Right cardiac atrium (tissue), 5 donors: ENCODE measurements at regions of chr4 and their contacts with region 1.

Region 1: GRCh38 chr4:113756005-113756410 is 5.5 kb downstream of the CAMK2D start:
- DNase-seq: no peak
- ATAC-seq: no peak
- H3K4me3 ChIP-seq: peak overlapping the region; percentile 6
- H3K27ac ChIP-seq: no peak overlapping the region
- H3K4me1 ChIP-seq: no peaks in the 10 kb centered on the region
- H3K27me3 ChIP-seq: no peaks in the 10 kb centered on the region

Region 2: GRCh38 chr4:113645771-113646441 is 110.1 kb before region 1 on chr4:
- intact Hi-C with region 1: no loop called
- DNase-seq: no peak
- ATAC-seq: peak; percentile 73 to 88
- H3K4me3 ChIP-seq: no peak overlapping the region
- H3K27ac ChIP-seq: peak overlapping the region; percentile 50
- H3K4me1 ChIP-seq: peaks cover 12% of the 10 kb centered on the region
- H3K27me3 ChIP-seq: no peaks in the 10 kb centered on the region

Region 3: DNA sequence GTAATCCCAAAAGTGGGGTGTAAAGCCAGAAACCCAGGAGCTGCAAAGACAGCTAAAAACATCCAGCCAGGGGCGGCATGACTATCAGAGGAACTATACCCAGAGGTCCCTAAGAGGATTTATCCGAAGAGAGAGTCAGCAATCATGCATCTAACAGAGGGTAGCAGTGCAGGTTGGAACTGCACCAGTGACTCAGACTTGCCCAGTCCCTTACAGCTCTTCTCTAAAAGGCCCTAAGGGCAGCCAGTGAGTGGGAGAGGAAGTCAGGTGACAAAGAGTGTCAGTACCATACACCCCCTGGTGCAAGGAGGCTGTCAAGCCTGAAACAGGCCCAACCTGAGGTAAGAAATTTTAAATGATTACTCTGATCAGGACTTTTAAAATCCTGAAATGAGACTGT is 82.6 kb before region 1 on chr4:
- intact Hi-C with region 1: loop called in 1 of 4 experiments (anchors 10 kb)
- DNase-seq: no peak
- ATAC-seq: peak in 1 of 2 donors; percentile 45
- H3K4me3 ChIP-seq: no peak overlapping the region
- H3K27ac ChIP-seq: no peak overlapping the region
- H3K4me1 ChIP-seq: peaks cover 17% of the 10 kb centered on the region
- H3K27me3 ChIP-seq: no peaks in the 10 kb centered on the region

Region 4: GRCh38 chr4:113781439-113782040 is 25.5 kb after region 1 on chr4:
- intact Hi-C with region 1: no loop called
- DNase-seq: no peak
- ATAC-seq: peak in 1 of 2 donors; percentile 31
- H3K4me3 ChIP-seq: no peak overlapping the region
- H3K27ac ChIP-seq: no peak overlapping the region
- H3K4me1 ChIP-seq: peaks cover 1% of the 10 kb centered on the region
- H3K27me3 ChIP-seq: no peaks in the 10 kb centered on the region

Region 5: DNA sequence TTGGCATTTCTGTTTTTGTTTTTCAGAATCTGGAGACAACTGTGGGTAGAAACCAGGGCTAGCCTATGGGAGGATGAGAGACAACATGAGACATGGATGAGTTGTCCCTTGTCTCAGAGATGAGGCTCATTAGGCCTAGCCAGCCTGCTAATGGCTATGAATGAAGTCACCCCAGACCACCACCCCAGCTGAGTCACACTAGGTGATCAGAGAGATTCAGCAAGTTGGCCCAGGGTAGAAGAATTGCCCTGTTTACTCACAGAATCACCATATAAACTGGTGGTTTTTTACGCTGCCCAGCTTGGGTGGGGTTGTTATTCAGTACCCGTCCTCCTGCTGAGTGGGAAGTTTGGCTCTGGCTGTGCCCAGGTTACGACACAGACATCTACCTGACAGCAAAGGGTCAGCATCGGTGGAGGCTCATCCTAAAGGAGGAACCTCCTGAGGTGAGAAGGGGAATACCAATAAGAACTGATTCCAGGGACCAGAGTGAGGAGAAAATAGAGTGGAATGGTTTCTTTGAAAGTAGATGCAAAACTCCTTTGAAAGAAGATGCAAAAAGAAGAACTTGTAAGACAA is 240.7 kb after region 1 on chr4:
- intact Hi-C with region 1: no loop called
- DNase-seq: no peak
- ATAC-seq: no peak
- H3K4me3 ChIP-seq: no peak overlapping the region
- H3K27ac ChIP-seq: no peak overlapping the region
- H3K4me1 ChIP-seq: no peaks in the 10 kb centered on the region
- H3K27me3 ChIP-seq: no peaks in the 10 kb centered on the region